Heart left ventricle (tissue), 16 donors: ENCODE measurements at regions of chr14 and their contacts with region 1.

Region 1: GRCh38 chr14:35301735-35302528 is 9.8 kb downstream of the PSMA6 start:
- DNase-seq: no peak
- ATAC-seq: no peak
- H3K4me3 ChIP-seq: no peak overlapping the region
- H3K27ac ChIP-seq: peak overlapping the region in 5 of 12 donors; percentile 18 to 58 (median 24)
- H3K4me1 ChIP-seq: peaks cover 4 to 72% (median 25%) of the 10 kb centered on the region in 12 donors
- H3K27me3 ChIP-seq: no peaks in the 10 kb centered on the region
- CTCF ChIP-seq: no peak
- POLR2A ChIP-seq: no peak

Region 2: GRCh38 chr14:35167496-35167895 is 134.4 kb before region 1 on chr14:
- intact Hi-C with region 1: no loop called
- DNase-seq: no peak
- ATAC-seq: no peak
- H3K4me3 ChIP-seq: no peak overlapping the region
- H3K27ac ChIP-seq: no peak overlapping the region
- H3K4me1 ChIP-seq: no peaks in the 10 kb centered on the region
- H3K27me3 ChIP-seq: no peaks in the 10 kb centered on the region
- CTCF ChIP-seq: no peak
- POLR2A ChIP-seq: no peak

Region 3: DNA sequence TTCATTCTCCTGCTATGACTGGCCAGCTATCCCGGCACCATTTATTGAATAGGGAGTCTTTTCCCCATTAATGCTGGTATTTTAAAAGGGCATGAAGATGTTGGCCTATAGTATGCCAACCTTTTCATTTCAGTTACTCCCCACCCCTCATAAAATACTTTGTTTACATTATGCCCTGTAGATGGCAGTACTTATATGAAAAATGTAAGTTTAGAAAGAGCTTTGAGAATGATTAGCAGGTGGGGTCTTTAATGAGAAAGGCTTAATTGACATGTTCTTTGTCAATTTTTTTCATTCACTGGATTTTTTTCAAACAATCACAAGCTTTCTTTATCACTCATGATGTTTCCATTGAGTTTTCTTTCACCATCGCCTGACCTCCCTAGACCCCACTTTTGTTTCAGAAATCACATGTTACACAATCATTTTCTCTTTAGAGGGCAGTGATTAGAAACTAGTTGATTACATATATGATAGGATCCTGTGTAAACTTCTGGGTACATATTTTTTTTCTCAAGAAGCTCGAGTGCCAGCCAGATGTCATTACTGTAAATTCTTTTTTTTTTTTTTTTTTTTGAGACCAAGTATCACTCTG is 72.3 kb before region 1 on chr14:
- intact Hi-C with region 1: loop called in 1 of 10 experiments (anchors 5 kb)
- DNase-seq: no peak
- ATAC-seq: no peak
- H3K4me3 ChIP-seq: no peak overlapping the region
- H3K27ac ChIP-seq: no peak overlapping the region
- H3K4me1 ChIP-seq: peaks cover 0 to 33% (median 0%) of the 10 kb centered on the region in 12 donors
- H3K27me3 ChIP-seq: no peaks in the 10 kb centered on the region
- CTCF ChIP-seq: peak in 11 of 12 donors; percentile 9 to 49 (median 30)
- POLR2A ChIP-seq: no peak

Region 4: GRCh38 chr14:35317820-35318219 is 15.9 kb after region 1 on chr14:
- intact Hi-C with region 1: loop called in 1 of 10 experiments (anchors 1 kb)
- DNase-seq: no peak
- ATAC-seq: no peak
- H3K4me3 ChIP-seq: no peak overlapping the region
- H3K27ac ChIP-seq: no peak overlapping the region
- H3K4me1 ChIP-seq: peaks cover 0 to 9% (median 0%) of the 10 kb centered on the region in 12 donors
- H3K27me3 ChIP-seq: no peaks in the 10 kb centered on the region
- CTCF ChIP-seq: no peak
- POLR2A ChIP-seq: no peak

Region 5: DNA sequence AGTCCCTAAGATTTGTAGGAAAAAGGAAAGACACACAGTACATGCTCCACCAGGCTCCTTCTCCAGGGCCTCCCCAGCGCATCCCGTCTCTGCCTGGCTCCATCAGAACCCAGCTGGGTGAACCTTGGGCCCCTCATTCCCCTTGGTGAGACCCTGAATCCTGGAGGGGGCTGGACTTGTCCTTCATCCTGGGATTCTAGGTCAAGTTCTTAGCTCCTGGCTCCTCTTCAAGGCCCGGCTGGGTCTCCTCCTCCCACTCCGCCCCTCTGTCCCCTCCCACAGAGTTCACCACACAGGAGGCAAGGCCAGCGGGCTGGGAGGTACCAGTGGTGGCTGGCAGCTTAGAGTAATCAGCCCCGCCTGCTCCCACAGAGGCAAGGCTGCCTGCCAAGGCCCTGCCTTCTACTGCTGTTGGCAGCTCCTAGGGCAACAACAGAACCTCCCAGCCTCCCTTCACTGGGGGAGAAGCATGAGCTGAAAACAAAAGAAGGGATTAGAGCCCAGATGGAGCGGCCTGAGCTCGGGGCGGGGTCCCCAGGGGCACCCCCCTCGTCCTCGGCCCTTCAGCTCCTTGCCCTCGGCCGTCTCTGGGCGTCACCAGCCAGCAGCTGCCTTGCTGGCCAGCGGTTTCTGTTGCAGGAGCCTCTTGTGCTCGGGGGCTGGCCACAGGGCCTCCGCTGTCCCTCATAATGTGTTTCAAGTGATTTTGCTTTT is 39.7 kb after region 1 on chr14:
- intact Hi-C with region 1: loop called in 1 of 10 experiments (anchors 5 kb)
- DNase-seq: peak; percentile 94 to 98 (median 96)
- ATAC-seq: peak; percentile 91 to 95 (median 92)
- H3K4me3 ChIP-seq: peak overlapping the region in 10 of 12 donors; percentile 14 to 51 (median 38)
- H3K27ac ChIP-seq: peak overlapping the region; percentile 85 to 99 (median 94)
- H3K4me1 ChIP-seq: peaks cover 16 to 74% (median 47%) of the 10 kb centered on the region in 12 donors
- H3K27me3 ChIP-seq: no peaks in the 10 kb centered on the region
- CTCF ChIP-seq: no peak
- POLR2A ChIP-seq: peak in 1 of 2 donors; percentile 74

Region 6: GRCh38 chr14:35747379-35747778 is 445.4 kb after region 1 on chr14:
- intact Hi-C with region 1: no loop called
- DNase-seq: no peak
- ATAC-seq: no peak
- H3K4me3 ChIP-seq: no peak overlapping the region
- H3K27ac ChIP-seq: no peak overlapping the region
- H3K4me1 ChIP-seq: no peaks in the 10 kb centered on the region
- H3K27me3 ChIP-seq: no peaks in the 10 kb centered on the region
- CTCF ChIP-seq: no peak
- POLR2A ChIP-seq: no peak